ENCODE measurements at regions of chr6 and their contacts with region 1.

Region 1: GRCh38 chr6:142692942-142693341 is 252.0 kb downstream of the HIVEP2 start:
- DNase-seq: peak; percentile 41
- CTCF ChIP-seq: peak; percentile 89

Region 2: DNA sequence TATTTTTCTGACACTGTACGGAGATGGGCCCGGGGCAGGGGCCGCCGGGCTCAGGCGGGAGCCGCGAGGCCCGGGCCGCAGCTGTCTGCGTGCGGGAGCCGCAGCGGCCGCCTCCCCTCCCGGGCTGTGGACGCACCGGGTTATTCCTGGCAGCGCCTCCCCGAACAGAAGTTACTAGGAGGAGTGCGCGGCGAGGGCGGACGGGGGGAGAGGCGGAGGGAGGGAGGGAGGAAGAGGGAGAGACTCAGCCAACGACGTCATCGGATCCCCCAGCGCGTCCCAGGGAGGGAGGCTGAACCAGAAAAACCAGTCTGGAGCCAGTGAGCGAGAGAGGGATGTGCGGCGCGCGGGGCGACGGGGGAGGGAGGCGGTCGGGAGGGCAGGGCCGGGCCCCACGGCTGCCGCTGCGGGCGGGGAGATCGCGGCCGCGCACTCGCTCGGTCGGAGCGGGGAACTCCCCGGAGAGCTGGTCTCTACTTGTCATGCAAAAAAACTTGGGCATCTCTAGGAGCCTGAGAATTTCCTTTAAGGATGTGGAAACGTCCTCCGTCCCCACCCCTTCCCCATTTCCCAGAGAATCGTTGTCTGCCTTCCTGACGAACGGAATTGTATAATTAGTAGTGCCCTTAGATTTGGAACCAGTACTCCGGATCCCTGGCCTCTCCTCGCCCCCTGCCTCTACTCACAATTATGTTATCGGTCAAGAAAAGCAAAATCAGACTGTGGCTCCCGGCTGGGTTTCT is 253.4 kb after region 1 on chr6:
- in situ Hi-C with region 1: loop called (anchors 10 kb)
- DNase-seq: peak; percentile 83
- CTCF ChIP-seq: no peak

Region 3: DNA sequence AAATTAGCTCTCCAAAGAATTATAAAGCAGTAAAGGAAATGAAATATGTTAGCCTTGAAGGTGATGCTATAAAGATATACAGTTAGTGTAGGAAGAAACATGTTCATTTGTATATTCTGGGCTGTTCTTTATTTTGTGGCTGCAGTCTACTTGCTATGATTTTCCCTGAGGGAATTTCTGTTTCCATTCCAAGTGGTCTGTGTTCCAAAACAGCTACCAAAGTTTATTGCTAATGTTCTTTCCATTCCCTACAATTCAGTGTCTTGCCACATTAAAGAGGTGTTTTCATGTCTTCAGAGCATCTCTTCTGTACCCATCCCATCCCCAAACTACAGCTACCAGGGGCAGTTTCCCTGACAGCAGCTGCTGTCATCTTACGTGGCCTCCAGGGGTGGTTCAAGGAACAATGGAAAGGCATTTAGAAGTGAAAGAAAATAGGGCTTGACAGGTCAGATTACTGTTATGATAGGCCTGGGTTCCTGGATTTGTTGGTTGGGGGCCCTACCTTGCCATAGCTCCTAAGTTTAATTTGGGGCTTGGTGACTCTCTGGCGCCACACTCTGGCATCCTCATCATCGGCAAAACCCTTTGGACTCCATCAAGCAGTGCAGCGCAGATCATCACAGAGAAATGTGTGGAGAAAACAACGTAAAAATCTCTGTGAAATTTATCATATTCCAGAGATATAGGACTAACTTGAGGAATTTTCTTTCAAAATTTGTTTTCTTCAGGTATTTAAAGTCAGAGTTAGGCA is 333.9 kb after region 1 on chr6:
- in situ Hi-C with region 1: loop called (anchors 25 kb)
- DNase-seq: no peak
- CTCF ChIP-seq: peak; percentile 41

Region 4: GRCh38 chr6:143279385-143279784 is 586.4 kb after region 1 on chr6:
- in situ Hi-C with region 1: loop called (anchors 25 kb)
- DNase-seq: peak; percentile 29
- CTCF ChIP-seq: peak; percentile 27

Region 5: GRCh38 chr6:143427109-143427817 is 734.3 kb after region 1 on chr6:
- in situ Hi-C with region 1: loop called (anchors 10 kb)
- DNase-seq: peak; percentile 75
- CTCF ChIP-seq: peak; percentile 92

Measured in GM13976 (cell line).